ENCODE measurements at regions of chr14 and their contacts with region 1.

Region 1: DNA sequence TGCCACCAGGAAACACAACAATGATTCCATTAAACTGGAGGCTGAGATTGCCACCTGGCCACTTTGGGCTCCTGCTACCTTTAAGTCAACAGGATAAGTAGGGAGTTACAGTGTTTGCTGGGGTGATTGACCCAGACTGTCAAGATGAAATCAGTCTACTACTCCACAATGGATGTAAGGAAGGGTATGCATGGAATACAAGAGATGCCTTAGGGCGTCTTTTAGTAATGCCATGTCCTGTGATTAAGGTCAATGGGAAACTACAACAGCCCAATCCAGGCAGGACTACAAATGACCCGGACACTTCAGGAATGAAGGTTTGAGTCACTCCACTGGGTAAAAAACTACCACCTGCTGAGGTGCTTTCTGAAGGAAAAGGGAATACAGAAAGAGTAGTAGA is 852.5 kb downstream of the LRFN5 start:
- DNase-seq: no peak
- H3K4me3 ChIP-seq: no peak overlapping the region
- H3K27ac ChIP-seq: no peak overlapping the region
- H3K4me1 ChIP-seq: no peaks in the 10 kb centered on the region
- CTCF ChIP-seq: no peak

Region 2: DNA sequence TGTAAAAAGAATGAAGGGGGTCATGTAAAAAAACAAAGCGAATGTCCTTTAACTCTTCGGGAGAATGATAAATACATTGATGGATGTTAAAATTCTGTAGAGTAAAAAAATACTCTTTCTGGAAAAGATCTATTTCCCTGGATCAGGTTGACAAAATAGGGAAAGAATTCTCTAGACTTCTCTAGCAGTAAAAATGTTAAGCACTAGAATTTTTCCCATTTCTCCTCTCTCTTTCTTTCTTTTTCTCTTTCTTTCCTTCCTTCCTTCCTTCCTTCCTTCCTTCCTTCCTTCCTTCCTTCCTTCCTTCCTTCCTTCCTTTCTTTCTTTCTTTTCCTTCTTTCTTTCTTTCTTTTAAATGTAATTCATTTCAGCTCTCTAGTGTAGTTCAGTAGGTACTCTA is 300.1 kb before region 1 on chr14:
- CTCF ChIA-PET with region 1: no interaction called
- POLR2A ChIA-PET with region 1: interaction called, 16 read pairs
- intact Hi-C with region 1: no loop called
- DNase-seq: no peak
- H3K4me3 ChIP-seq: no peak overlapping the region
- H3K27ac ChIP-seq: no peak overlapping the region
- H3K4me1 ChIP-seq: no peaks in the 10 kb centered on the region
- CTCF ChIP-seq: no peak

Region 3: DNA sequence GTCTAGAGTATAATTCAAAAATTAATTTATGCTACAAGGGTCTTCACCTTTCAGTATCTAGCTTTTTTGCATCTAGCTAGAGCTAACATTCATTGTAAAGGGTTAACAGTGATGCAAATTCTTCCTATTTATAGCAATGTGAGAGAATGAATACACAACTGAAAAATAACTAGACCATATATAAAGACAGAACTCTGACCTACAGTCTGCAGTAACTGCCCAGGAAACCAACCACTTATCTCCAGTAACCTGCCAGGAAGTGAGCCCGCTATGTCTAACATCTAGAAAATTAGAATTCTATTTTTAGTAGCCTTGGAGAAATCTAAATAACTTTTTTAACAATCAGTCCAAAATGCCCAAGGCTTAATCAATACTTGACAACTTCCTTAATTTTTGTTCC is 169.4 kb after region 1 on chr14:
- CTCF ChIA-PET with region 1: no interaction called
- POLR2A ChIA-PET with region 1: no interaction called
- intact Hi-C with region 1: no loop called
- DNase-seq: no peak
- H3K4me3 ChIP-seq: no peak overlapping the region
- H3K27ac ChIP-seq: no peak overlapping the region
- H3K4me1 ChIP-seq: no peaks in the 10 kb centered on the region
- CTCF ChIP-seq: no peak

Region 4: DNA sequence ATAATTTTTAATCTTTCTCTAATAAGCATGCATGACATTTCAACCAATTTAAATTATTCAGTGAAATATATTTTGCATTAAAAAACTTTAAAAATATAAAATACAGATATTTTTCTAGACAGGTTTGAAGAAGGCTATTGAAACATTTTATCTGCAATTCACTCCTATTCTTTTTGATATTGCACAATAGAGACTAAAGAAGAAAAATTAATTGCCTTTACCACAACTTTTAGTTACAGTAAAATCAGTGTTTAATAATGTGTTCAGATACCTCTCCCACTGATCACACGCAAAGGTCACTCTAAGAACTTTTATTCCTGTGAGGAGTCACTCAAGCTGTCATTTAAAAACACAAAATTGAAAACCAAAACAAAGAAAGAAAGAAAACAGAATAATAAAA is 631.2 kb after region 1 on chr14:
- CTCF ChIA-PET with region 1: no interaction called
- POLR2A ChIA-PET with region 1: no interaction called
- intact Hi-C with region 1: no loop called
- DNase-seq: no peak
- H3K4me3 ChIP-seq: no peak overlapping the region
- H3K27ac ChIP-seq: no peak overlapping the region
- H3K4me1 ChIP-seq: no peaks in the 10 kb centered on the region
- CTCF ChIP-seq: no peak